Mammary epithelial cell (primary cell): ENCODE measurements at regions of chr1 and their contacts with region 1.

Region 1: DNA sequence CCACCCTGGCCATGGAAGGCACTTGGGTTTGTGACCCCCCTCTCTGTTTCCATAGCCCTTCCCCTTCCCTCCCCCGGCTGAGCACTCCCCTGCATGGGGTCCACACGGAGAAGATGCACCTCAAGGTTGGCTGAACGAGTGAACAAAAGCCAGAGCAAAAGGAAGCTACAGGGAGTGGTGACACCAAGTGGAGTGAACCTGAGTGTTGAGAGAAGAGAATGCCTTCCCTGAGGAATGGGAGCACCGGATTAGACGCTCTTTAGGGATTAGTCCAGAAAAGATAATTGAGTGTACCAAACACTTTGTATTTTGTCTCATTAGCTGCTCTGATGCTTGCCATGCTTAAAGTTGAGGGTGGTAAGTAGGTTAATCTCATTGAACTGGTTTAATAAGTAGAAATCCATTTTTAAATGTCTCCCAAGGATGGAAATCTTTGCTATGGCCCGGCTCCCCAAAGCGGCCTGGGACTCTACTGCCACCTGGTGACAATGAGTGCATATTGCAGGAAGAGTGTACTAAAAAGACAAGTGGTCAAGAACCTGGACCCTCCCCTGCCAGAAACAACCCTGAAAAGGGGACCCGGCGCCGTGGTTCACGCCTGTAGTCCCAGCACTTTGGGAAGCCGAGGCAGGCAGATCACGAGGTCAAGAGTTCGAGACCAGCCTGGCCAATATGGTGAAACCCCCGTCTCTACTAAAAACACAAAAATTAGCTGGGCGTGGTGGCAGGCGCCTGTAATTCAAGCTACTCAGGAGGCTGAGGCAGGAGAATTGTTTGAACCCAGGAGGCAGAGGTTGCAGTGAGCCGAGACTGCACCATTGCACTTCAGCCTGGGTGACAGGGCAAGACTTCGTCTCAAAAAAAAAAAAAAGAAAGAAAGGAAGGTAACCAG is 150.6 kb upstream of the ZC3H12A start:
- DNase-seq: peak; percentile 11
- H3K4me3 ChIP-seq: no peak overlapping the region
- H3K27ac ChIP-seq: no peak overlapping the region
- H3K4me1 ChIP-seq: no peaks in the 10 kb centered on the region
- H3K27me3 ChIP-seq: peaks cover 2% of the 10 kb centered on the region
- CTCF ChIP-seq: peak; percentile 79 to 88

Region 2: DNA sequence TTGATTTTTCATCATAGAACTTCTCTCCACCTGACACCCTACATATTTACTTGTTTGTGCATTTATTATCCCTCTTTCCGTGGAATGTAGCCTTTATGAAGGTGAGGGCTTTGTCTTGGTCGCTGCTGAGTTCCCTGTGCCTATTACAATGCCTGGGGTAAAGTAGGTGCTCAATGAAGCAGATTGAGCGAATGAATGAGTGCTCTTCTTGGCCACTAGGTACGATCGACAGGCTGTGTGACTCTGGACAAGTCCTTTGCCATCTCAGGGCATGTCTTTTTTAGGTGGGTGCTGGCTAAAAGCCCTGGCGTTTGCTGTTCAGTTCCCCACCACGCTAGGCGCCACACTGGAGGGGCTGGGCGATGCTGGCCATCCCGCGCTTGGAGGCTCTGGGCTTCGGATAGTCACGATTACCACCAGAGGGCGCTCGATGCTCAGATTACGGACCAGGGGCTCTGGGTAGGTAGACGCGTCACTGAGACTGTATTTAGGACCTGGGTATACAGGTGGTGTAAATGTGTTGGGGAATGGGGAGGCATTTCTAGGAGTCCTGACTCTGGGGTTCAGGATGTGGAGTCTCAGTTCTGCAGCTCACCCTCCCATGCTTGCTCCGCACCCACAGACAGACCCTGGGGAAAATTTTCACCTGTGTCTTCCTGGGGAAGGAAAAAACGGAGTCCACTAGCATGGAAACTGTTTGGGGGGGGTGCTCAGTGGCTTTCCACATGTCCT is 770.0 kb before region 1 on chr1:
- CTCF ChIA-PET with region 1: no interaction called
- dilution Hi-C with region 1: no loop called
- in situ Hi-C with region 1: no loop called
- intact Hi-C with region 1: loop called (anchors 1 kb)
- DNase-seq: peak; percentile 41
- H3K4me3 ChIP-seq: no peak overlapping the region
- H3K27ac ChIP-seq: no peak overlapping the region
- H3K4me1 ChIP-seq: no peaks in the 10 kb centered on the region
- H3K27me3 ChIP-seq: no peaks in the 10 kb centered on the region
- CTCF ChIP-seq: peak; percentile 65 to 79

Region 3: GRCh38 chr1:36576118-36576517 is 747.6 kb before region 1 on chr1:
- CTCF ChIA-PET with region 1: no interaction called
- dilution Hi-C with region 1: no loop called
- in situ Hi-C with region 1: no loop called
- intact Hi-C with region 1: loop called (anchors 1 kb)
- DNase-seq: peak; percentile 12
- H3K4me3 ChIP-seq: no peak overlapping the region
- H3K27ac ChIP-seq: no peak overlapping the region
- H3K4me1 ChIP-seq: no peaks in the 10 kb centered on the region
- H3K27me3 ChIP-seq: no peaks in the 10 kb centered on the region
- CTCF ChIP-seq: peak; percentile 79 to 95

Region 4: GRCh38 chr1:36609241-36610027 is 714.3 kb before region 1 on chr1:
- CTCF ChIA-PET with region 1: no interaction called
- dilution Hi-C with region 1: no loop called
- in situ Hi-C with region 1: no loop called
- intact Hi-C with region 1: loop called (anchors 1 kb)
- DNase-seq: peak; percentile 48
- H3K4me3 ChIP-seq: no peak overlapping the region
- H3K27ac ChIP-seq: no peak overlapping the region
- H3K4me1 ChIP-seq: no peaks in the 10 kb centered on the region
- H3K27me3 ChIP-seq: no peaks in the 10 kb centered on the region
- CTCF ChIP-seq: peak; percentile 80 to 87

Region 5: DNA sequence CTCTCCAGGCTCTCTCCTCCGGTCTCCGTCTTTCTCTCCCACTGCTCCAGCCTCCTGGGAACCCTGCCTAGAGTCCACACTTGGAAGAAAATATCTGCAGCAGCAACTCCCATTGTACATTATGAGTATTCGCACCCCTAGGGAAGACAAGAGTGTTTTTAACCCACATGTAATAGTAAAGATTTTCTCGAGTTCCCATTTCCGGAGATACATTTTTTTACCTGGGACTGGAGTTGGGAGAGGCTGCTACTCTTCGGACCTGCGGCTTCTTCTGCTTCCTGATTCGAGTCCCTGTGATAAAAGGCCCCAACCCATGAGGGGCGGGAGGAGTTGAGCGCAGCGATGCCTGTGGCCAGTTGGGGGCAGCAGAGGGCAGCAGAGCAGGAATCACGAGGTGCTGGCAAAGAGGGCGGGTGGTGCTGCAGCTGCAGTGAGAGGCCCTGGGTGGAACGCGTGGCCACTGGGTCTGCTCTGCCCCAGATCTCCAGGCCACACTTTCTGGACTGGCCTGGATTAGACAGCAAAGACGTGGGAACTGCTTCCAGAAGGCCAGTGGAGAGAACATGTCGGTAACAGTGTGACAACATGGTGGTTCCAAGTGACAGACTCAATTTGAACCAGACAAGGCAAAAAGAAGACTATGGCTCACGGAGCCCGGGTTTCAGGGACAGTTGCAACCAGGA is 620.1 kb before region 1 on chr1:
- CTCF ChIA-PET with region 1: no interaction called
- dilution Hi-C with region 1: no loop called
- in situ Hi-C with region 1: no loop called
- intact Hi-C with region 1: loop called (anchors 1 kb)
- DNase-seq: peak; percentile 37
- H3K4me3 ChIP-seq: no peak overlapping the region
- H3K27ac ChIP-seq: no peak overlapping the region
- H3K4me1 ChIP-seq: no peaks in the 10 kb centered on the region
- H3K27me3 ChIP-seq: peaks cover 2% of the 10 kb centered on the region
- CTCF ChIP-seq: peak; percentile 87 to 90

Region 6: GRCh38 chr1:37387859-37388258 is 64.1 kb after region 1 on chr1:
- CTCF ChIA-PET with region 1: no interaction called
- dilution Hi-C with region 1: loop called (anchors 5 kb)
- in situ Hi-C with region 1: no loop called
- intact Hi-C with region 1: no loop called
- DNase-seq: no peak
- H3K4me3 ChIP-seq: no peak overlapping the region
- H3K27ac ChIP-seq: no peak overlapping the region
- H3K4me1 ChIP-seq: no peaks in the 10 kb centered on the region
- H3K27me3 ChIP-seq: no peaks in the 10 kb centered on the region
- CTCF ChIP-seq: no peak

Region 7: GRCh38 chr1:37434292-37434907 is 110.7 kb after region 1 on chr1:
- CTCF ChIA-PET with region 1: no interaction called
- dilution Hi-C with region 1: no loop called
- in situ Hi-C with region 1: no loop called
- intact Hi-C with region 1: loop called (anchors 10 kb)
- DNase-seq: no peak
- H3K4me3 ChIP-seq: no peak overlapping the region
- H3K27ac ChIP-seq: no peak overlapping the region
- H3K4me1 ChIP-seq: no peaks in the 10 kb centered on the region
- H3K27me3 ChIP-seq: no peaks in the 10 kb centered on the region
- CTCF ChIP-seq: peak; percentile 87 to 96